Activated CD4-positive, alpha-beta T cell treated with anti-CD3 and anti-CD28 coated beads for 36 hours (primary cell): ENCODE measurements at regions of chr2 and their contacts with region 1.

Region 1: DNA sequence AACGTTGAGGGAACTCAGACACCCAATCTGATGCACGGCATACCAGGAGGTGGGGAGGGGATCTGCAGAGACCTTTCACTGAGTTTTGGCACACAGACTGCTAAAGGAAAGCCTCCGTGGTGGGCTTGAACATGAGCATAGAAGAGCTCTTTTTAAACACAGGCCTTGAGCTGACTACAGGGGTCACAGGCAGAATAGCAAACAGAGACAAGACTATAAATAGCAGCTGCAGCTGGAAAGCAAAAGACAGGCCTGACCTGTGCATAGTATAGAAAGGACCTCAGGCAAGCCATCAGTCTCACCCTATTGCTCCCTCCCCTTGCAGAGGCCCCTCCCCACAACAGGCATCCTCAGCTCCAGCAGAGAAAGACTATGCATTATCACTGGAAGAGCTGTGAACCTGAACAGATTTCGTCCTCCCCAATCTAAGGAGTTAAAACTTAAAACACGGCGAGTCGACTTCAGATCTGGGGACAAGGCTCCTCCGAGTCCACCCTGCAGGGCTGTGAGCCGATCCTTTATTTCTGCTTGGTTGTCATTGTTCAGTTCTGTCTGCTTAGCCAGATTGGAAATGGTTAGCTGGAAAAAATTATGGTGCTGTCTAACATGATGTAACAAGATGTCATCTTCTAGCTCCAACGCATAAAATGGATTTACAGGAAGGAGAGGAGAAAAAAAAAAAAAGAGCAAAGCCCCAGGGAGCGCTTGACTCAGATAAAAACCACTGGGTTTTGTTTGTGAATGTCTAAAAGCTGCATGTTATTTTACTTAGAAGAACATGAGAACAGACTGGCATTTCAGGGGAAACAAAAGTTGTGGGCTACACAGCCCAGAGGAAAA is 25.2 kb upstream of the LCLAT1 start:
- DNase-seq: peak; percentile 48
- ATAC-seq: peak; percentile 57
- H3K4me3 Mint-ChIP-seq: peak overlapping the region; percentile 68
- H3K27ac Mint-ChIP-seq: peak overlapping the region; percentile 96
- H3K4me1 Mint-ChIP-seq: peaks cover 48% of the 10 kb centered on the region
- H3K27me3 Mint-ChIP-seq: no peaks in the 10 kb centered on the region

Region 2: DNA sequence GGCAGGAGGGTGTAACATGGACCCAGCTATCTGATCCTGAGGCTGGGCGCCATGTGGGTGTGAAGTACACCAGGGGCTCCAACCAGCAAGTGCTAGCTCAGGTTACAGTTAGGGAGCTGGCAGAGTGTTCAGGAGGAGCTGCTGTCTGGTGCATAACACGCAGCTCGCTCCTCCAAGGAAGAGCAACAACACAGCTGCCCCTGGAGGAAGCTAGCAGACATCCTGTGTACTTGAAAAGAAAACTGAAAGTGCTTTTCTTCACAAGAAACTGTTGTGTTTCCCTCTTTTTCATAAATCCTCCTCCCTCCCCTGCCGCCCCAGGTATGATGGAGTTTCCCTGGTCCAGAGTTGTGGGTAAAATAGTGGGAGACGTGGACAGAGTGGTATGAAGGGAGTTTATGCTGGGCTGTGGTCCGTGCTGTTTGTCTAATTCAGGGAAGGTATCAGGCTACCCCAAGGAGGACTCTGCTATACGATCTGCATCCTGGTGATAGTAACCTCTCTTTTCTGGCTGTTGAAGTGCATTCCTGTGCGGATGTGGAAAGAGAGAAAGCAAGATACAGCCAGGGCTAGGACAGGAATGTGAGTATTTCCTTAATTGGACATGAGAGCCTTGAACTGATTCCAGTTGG is 196.6 kb before region 1 on chr2:
- CTCF ChIA-PET with region 1: interaction called, 5 read pairs
- POLR2A ChIA-PET with region 1: interaction called, 11 read pairs
- intact Hi-C with region 1: loop called (anchors 1 kb)
- DNase-seq: peak; percentile 58
- ATAC-seq: peak; percentile 64
- H3K4me3 Mint-ChIP-seq: peak overlapping the region; percentile 77
- H3K27ac Mint-ChIP-seq: peak overlapping the region; percentile 93
- H3K4me1 Mint-ChIP-seq: peaks cover 74% of the 10 kb centered on the region
- H3K27me3 Mint-ChIP-seq: peaks cover 9% of the 10 kb centered on the region

Region 3: DNA sequence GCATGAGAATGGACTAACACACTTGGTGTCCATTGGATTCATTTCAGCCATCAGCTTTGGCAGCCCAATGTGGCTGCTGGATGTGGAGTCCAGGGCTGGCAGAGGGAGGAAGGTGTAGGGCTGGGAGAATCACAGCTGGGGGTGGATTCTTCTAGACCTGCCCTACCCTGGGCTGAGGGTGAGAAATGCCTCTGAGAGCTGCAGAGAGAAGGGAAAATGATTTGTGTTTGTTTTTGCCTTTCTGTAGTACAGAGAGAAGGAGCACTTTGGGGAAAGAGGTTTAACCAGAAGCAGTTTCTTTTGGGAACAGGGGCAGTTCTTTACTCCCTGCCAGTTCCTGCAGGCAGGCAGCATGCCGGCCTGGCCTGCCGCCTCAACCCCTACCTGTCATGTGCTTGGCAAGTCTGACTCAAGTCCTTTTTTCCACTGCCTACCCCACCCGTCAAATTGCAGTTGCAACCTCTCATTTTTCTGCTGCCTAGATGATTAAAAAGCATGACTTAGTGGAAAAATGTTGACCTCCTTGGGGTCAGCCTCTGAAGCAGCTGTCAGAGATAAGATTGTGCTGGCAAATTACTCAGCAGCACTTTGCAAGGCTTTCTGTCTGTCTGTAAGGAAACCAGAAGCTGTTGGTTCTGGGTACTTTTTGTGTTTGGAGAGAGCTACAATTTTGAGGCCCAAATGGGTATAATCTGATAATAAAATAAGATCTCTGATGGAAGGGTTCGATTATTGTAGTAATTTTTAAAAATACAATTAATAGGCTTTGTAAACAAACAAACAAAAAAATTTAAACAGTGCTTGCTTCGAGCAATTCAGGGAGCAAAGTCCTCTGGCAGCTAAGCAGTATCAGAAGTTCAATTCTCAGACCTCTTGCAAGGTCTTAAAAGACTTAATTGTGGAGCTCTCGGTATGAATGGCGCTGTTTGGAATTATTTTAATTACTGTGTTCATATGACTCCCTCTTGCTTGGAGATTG is 168.8 kb before region 1 on chr2:
- CTCF ChIA-PET with region 1: interaction called, 3 read pairs
- POLR2A ChIA-PET with region 1: no interaction called
- intact Hi-C with region 1: loop called (anchors 1 to 5 kb)
- DNase-seq: peak; percentile 87
- ATAC-seq: peak; percentile 77
- H3K4me3 Mint-ChIP-seq: peak overlapping the region; percentile 42
- H3K27ac Mint-ChIP-seq: peak overlapping the region; percentile 88
- H3K4me1 Mint-ChIP-seq: peaks cover 96% of the 10 kb centered on the region
- H3K27me3 Mint-ChIP-seq: no peaks in the 10 kb centered on the region

Region 4: DNA sequence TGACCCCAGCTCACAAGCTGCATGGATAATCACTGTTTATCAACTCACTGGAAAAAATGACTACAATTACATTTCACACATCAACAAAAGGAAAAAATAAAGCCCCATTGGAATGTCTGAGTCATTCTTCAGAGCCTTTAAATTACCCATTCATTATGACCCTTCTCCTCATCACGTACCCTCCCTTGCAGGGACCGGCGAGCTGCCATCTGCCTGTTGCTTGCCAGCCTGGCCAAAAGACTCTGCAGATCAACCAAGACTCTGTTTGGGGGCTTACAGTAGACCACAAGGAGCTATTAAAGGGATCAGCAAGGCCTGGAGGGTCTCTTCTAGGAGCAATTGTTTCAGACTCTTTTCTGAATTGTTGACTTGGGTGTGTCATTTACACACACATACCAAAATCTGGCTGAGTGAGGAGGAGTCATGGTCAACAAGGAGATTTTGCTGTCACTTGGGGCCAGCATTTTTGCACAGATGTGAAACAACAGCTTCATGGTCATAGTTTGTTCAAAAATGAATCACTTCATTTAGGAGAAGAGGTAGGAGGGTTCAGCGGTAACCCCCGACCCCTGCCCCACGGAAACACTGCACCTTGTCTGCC is 148.5 kb before region 1 on chr2:
- CTCF ChIA-PET with region 1: no interaction called
- POLR2A ChIA-PET with region 1: interaction called, 5 read pairs
- intact Hi-C with region 1: loop called in 1 of 2 experiments (anchors 1 kb)
- DNase-seq: peak; percentile 73
- ATAC-seq: peak; percentile 70
- H3K4me3 Mint-ChIP-seq: peak overlapping the region; percentile 46
- H3K27ac Mint-ChIP-seq: peak overlapping the region; percentile 92
- H3K4me1 Mint-ChIP-seq: peaks cover 79% of the 10 kb centered on the region
- H3K27me3 Mint-ChIP-seq: no peaks in the 10 kb centered on the region

Region 5: GRCh38 chr2:30336978-30337841 is 84.6 kb before region 1 on chr2:
- CTCF ChIA-PET with region 1: interaction called, 3 read pairs
- POLR2A ChIA-PET with region 1: interaction called, 3 read pairs
- intact Hi-C with region 1: loop called (anchors 1 to 2 kb)
- DNase-seq: peak; percentile 82
- ATAC-seq: peak; percentile 77
- H3K4me3 Mint-ChIP-seq: peak overlapping the region; percentile 56
- H3K27ac Mint-ChIP-seq: peak overlapping the region; percentile 98
- H3K4me1 Mint-ChIP-seq: peaks cover 81% of the 10 kb centered on the region
- H3K27me3 Mint-ChIP-seq: no peaks in the 10 kb centered on the region

Region 6: GRCh38 chr2:30398084-30398873 is 23.5 kb before region 1 on chr2:
- CTCF ChIA-PET with region 1: no interaction called
- POLR2A ChIA-PET with region 1: no interaction called
- intact Hi-C with region 1: no loop called
- DNase-seq: no peak
- ATAC-seq: peak; percentile 51
- H3K4me3 Mint-ChIP-seq: no peak overlapping the region
- H3K27ac Mint-ChIP-seq: no peak overlapping the region
- H3K4me1 Mint-ChIP-seq: no peaks in the 10 kb centered on the region
- H3K27me3 Mint-ChIP-seq: no peaks in the 10 kb centered on the region

Region 7: GRCh38 chr2:30410217-30410616 is 11.6 kb before region 1 on chr2:
- CTCF ChIA-PET with region 1: interaction called, 3 read pairs
- POLR2A ChIA-PET with region 1: interaction called, 4 read pairs
- intact Hi-C with region 1: loop called in 1 of 2 experiments (anchors 1 kb)
- DNase-seq: peak; percentile 35
- ATAC-seq: peak; percentile 86
- H3K4me3 Mint-ChIP-seq: no peak overlapping the region
- H3K27ac Mint-ChIP-seq: peak overlapping the region; percentile 71
- H3K4me1 Mint-ChIP-seq: peaks cover 39% of the 10 kb centered on the region
- H3K27me3 Mint-ChIP-seq: no peaks in the 10 kb centered on the region

Region 8: GRCh38 chr2:30580391-30580790 is 158.6 kb after region 1 on chr2:
- CTCF ChIA-PET with region 1: no interaction called
- POLR2A ChIA-PET with region 1: no interaction called
- intact Hi-C with region 1: no loop called
- DNase-seq: no peak
- ATAC-seq: no peak
- H3K4me3 Mint-ChIP-seq: no peak overlapping the region
- H3K27ac Mint-ChIP-seq: no peak overlapping the region
- H3K4me1 Mint-ChIP-seq: peaks cover 5% of the 10 kb centered on the region
- H3K27me3 Mint-ChIP-seq: no peaks in the 10 kb centered on the region